ENCODE measurements at regions of chr9 and their contacts with region 1.

Region 1: DNA sequence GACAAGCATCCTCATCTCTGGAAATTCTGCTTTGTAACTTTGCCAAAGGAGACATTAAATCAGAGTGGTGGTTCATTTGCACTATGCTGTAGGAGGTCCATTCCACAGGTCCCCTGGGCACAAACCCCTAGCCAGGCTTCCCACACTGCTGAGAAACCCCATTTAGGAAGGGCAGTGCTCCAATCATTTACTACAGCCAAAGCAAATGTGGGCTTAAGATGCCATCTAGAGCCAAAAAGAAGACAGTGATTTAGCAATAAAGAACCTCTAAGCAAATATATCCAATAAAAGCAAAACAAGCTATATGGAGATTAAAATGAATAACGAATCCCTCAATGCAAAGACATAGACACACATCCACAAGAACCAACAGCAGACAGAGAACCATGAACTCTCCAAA is 129.0 kb upstream of the ALDH1B1 start:
- DNase-seq: no peak
- ATAC-seq: peak; percentile 29; the same call in 1 of the 3 replicates
- H3K4me3 ChIP-seq: no peak overlapping the region
- H3K27ac ChIP-seq: no peak overlapping the region
- H3K4me1 ChIP-seq: no peaks in the 10 kb centered on the region
- H3K27me3 ChIP-seq: no peaks in the 10 kb centered on the region
- CTCF ChIP-seq: peak in 1 of 3 experiments; percentile 34; a peak in 1 of 6 replicates
- EP300 ChIP-seq: no peak
- POLR2A ChIP-seq: no peak
- RAD21 ChIP-seq: peak; percentile 70

Region 2: GRCh38 chr9:37302277-37302676 is 961.3 kb before region 1 on chr9:
- CTCF ChIA-PET with region 1: no interaction called
- POLR2A ChIA-PET with region 1: no interaction called
- RAD21 ChIA-PET with region 1: no interaction called
- SMC1A ChIA-PET with region 1: no interaction called
- in situ Hi-C with region 1: no loop called
- intact Hi-C with region 1: no loop called
- DNase-seq: peak; percentile 90
- ATAC-seq: peak; percentile 91
- H3K4me3 ChIP-seq: peak overlapping the region; percentile 43; the same call in 1 of the 2 replicates
- H3K27ac ChIP-seq: peak overlapping the region; percentile 95
- H3K4me1 ChIP-seq: peaks cover 48% of the 10 kb centered on the region
- H3K27me3 ChIP-seq: no peaks in the 10 kb centered on the region
- CTCF ChIP-seq: no peak
- EP300 ChIP-seq: peak; percentile 82 to 93
- POLR2A ChIP-seq: no peak
- RAD21 ChIP-seq: peak; percentile 31; the same call in 1 of the 2 replicates

Region 3: DNA sequence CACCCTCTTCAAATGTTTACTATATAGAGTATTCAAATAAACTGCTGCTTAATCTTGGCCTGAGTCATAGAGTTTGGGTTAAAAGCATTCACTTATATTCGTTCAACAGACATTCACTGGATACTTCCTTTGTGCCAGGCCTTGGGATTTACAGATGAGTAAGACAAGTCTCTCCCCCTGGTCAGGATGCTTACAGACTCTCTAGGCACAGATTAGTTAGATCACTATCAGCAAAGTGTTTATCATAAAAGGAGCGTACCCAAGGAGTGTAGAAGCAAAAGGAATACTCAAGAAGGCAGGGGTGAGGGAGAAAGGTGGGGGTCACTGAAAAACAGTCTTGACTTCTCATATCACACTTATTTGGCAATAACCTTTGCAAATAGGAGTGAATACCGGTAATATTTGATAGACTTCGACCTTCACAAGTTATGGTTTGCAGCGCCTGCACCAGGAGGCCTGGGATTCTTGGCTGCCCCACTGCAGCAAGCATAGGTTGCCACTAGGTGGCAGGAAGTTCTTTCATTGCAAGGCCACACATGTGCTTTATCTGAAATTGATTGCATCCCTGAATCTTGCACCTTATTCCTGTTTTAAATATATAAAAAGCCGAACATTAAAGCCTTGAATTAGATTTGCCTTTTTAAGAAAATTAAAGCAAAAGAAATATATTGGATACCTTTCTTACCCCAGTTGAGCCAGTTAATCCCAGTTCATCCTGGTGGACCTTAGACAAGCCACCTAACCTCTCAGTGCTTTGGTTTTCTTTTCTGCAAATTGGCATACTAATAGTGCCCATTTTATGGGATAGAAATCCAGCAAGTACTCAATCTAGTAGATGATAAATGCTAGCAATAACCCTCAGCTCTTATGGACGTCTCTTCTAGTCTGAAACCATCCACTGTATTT is 516.4 kb before region 1 on chr9:
- CTCF ChIA-PET with region 1: interaction called, 10 read pairs
- POLR2A ChIA-PET with region 1: interaction called, 3 read pairs
- RAD21 ChIA-PET with region 1: interaction called, 4 read pairs
- SMC1A ChIA-PET with region 1: interaction called, 5 read pairs
- in situ Hi-C with region 1: no loop called
- intact Hi-C with region 1: no loop called
- DNase-seq: peak; percentile 3
- ATAC-seq: peak; percentile 97
- H3K4me3 ChIP-seq: no peak overlapping the region
- H3K27ac ChIP-seq: no peak overlapping the region
- H3K4me1 ChIP-seq: no peaks in the 10 kb centered on the region
- H3K27me3 ChIP-seq: no peaks in the 10 kb centered on the region
- CTCF ChIP-seq: peak; percentile 93 to 97 (median 96)
- EP300 ChIP-seq: no peak
- POLR2A ChIP-seq: no peak
- RAD21 ChIP-seq: peak; percentile 86

Region 4: DNA sequence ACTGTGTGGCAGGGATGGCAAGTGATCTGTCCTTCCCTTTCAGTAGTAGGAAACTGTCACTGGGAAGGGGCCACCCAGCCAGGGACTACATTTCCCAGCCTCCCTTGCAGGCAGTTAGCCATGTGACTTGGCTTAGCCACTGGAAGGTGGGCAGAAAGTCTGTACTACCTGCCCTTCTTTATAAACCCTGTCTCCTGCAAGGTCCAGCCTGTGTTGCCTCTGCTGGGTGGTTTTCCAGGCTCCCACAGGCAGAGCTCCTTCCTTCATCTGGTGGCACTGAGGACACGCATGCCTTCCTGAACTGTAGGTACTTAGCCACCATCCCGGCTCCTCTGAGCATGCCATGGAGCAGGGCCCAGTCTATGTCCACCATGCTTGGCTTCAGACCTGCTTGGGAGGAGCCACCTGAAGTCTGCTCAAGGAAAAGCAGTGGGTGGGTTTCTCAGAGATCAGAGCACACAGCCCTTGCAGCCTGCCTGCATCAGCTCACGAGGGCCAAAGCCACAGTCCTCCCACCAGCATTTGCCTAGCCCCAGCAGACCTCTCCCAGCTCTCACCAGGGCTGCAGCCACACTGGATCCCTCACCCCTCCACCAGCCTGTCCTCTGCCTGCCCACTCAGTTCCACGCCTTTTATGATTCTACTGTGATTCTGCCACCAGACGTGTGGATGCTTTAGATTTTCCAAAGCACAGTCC is 342.9 kb before region 1 on chr9:
- CTCF ChIA-PET with region 1: interaction called, 88 read pairs
- POLR2A ChIA-PET with region 1: no interaction called
- RAD21 ChIA-PET with region 1: interaction called, 51 read pairs
- SMC1A ChIA-PET with region 1: interaction called, 59 read pairs
- in situ Hi-C with region 1: no loop called
- intact Hi-C with region 1: no loop called
- DNase-seq: no peak
- ATAC-seq: peak; percentile 89
- H3K4me3 ChIP-seq: no peak overlapping the region
- H3K27ac ChIP-seq: no peak overlapping the region
- H3K4me1 ChIP-seq: no peaks in the 10 kb centered on the region
- H3K27me3 ChIP-seq: no peaks in the 10 kb centered on the region
- CTCF ChIP-seq: no peak
- EP300 ChIP-seq: no peak
- POLR2A ChIP-seq: no peak
- RAD21 ChIP-seq: no peak

Region 5: DNA sequence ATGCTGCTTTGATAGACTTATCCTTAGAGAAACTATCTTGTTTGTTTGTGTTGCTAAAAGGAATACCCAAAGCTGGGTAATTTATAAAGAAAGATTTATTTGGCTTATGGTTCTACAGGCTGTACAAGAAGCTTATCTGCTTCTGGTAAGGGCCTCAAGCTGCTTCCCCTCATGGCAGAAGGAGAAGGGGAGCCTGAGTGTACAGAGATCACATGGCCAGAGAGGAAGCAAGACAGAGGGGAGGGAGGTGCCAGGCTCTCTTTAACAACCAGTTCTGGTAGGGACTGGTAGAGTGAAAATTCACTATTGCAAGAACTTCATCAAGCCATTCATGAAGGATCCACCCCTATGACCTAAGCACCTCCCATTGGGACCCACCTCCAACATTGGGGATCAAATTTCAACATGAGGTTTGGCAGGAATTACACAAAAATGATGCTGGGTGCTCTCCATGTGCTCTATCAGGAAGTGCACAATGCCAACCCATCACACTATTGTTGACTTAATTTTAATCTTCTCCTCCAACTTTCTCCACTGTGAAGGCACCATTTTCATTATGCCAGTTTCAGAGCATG is 79.5 kb before region 1 on chr9:
- CTCF ChIA-PET with region 1: interaction called, 5 read pairs
- POLR2A ChIA-PET with region 1: no interaction called
- RAD21 ChIA-PET with region 1: interaction called, 4 read pairs
- SMC1A ChIA-PET with region 1: interaction called, 10 read pairs
- in situ Hi-C with region 1: no loop called
- intact Hi-C with region 1: no loop called
- DNase-seq: no peak
- ATAC-seq: no peak
- H3K4me3 ChIP-seq: no peak overlapping the region
- H3K27ac ChIP-seq: no peak overlapping the region
- H3K4me1 ChIP-seq: peaks cover 14% of the 10 kb centered on the region
- H3K27me3 ChIP-seq: peaks cover 0 to 2% of the 10 kb centered on the region in 2 experiments; a peak in 1 of 4 replicates
- CTCF ChIP-seq: no peak
- EP300 ChIP-seq: no peak
- POLR2A ChIP-seq: no peak
- RAD21 ChIP-seq: no peak

Region 6: GRCh38 chr9:38727497-38728001 is 464.0 kb after region 1 on chr9:
- CTCF ChIA-PET with region 1: no interaction called
- POLR2A ChIA-PET with region 1: no interaction called
- RAD21 ChIA-PET with region 1: no interaction called
- SMC1A ChIA-PET with region 1: no interaction called
- in situ Hi-C with region 1: no loop called
- intact Hi-C with region 1: no loop called
- DNase-seq: no peak
- ATAC-seq: no peak
- H3K4me3 ChIP-seq: no peak overlapping the region
- H3K27ac ChIP-seq: no peak overlapping the region
- H3K4me1 ChIP-seq: no peaks in the 10 kb centered on the region
- H3K27me3 ChIP-seq: no peaks in the 10 kb centered on the region
- CTCF ChIP-seq: peak; percentile 12 to 25 (median 20); a peak in 2 of 6 replicates
- EP300 ChIP-seq: no peak
- POLR2A ChIP-seq: no peak
- RAD21 ChIP-seq: 0 out of 2 replicates have a peak, but pooled peaks have one; percentile 24

Measured in GM12878 (cell line).